Activated naive CD4-positive, alpha-beta T cell treated with anti-CD3 and anti-CD28 coated beads, Interleukin-2, amount 10 ng/mL, durations not matched to agents 7 days and 5 days (primary cell): ENCODE measurements at regions of chr7 and their contacts with region 1.

Region 1: GRCh38 chr7:74401137-74401859 is 52.4 kb upstream of the GTF2IRD1 start:
- DNase-seq: peak; percentile 83
- H3K4me3 Mint-ChIP-seq: no peak overlapping the region
- H3K27ac Mint-ChIP-seq: no peak overlapping the region
- H3K4me1 Mint-ChIP-seq: no peaks in the 10 kb centered on the region
- H3K27me3 Mint-ChIP-seq: no peaks in the 10 kb centered on the region

Region 2: DNA sequence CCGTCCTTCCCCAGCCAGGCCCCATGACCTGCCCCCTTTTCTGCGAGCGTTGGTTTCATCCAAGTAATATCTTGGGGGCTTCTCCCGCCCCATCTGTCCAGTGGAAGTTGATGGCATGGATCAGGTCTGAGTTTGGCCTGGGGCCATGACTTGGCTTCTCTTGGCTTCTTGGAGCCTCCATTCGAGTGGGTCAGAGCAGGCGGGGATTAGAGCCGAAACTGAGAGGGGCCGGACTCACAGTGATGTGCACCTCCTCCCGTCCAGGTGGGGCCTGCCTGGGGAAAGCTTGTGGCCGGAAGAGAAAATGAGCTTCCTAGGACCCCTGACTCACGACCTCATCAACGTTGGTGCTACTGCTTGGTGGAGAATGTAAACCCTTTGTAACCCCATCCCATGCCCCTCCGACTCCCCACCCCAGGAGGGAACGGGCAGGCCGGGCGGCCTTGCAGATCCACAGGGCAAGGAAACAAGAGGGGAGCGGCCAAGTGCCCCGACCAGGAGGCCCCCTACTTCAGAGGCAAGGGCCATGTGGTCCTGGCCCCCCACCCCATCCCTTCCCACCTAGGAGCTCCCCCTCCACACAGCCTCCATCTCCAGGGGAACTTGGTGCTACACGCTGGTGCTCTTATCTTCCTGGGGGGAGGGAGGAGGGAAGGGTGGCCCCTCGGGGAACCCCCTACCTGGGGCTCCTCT is 332.8 kb before region 1 on chr7:
- CTCF ChIA-PET with region 1: interaction called, 29 read pairs
- DNase-seq: no peak
- H3K4me3 Mint-ChIP-seq: no peak overlapping the region
- H3K27ac Mint-ChIP-seq: no peak overlapping the region
- H3K4me1 Mint-ChIP-seq: peaks cover 2% of the 10 kb centered on the region
- H3K27me3 Mint-ChIP-seq: peaks cover 5% of the 10 kb centered on the region

Region 3: DNA sequence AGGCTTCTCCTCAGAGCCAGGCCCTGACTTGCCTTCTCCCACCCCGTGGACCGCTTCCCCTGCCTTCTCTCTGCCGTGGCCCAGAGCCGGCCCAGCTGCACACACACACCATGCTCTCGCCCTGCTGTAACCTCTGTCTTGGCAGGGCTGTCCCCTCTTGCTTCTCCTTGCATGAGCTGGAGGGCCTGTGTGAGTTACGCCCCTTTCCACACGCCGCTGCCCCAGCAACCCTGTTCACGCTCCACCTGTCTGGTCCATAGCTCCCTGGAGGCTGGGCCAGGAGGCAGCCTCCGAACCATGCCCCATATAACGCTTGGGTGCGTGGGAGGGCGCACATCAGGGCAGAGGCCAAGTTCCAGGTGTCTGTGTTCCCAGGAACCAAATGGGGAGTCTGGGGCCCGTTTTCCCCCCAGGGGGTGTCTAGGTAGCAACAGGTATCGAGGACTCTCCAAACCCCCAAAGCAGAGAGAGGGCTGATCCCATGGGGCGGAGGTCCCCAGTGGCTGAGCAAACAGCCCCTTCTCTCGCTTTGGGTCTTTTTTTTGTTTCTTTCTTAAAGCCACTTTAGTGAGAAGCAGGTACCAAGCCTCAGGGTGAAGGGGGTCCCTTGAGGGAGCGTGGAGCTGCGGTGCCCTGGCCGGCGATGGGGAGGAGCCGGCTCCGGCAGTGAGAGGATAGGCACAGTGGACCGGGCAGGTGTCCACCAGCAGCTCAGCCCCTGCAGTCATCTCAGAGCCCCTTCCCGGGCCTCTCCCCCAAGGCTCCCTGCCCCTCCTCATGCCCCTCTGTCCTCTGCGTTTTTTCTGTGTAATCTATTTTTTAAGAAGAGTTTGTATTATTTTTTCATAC is 279.7 kb before region 1 on chr7:
- CTCF ChIA-PET with region 1: no interaction called
- DNase-seq: no peak
- H3K4me3 Mint-ChIP-seq: no peak overlapping the region
- H3K27ac Mint-ChIP-seq: no peak overlapping the region
- H3K4me1 Mint-ChIP-seq: no peaks in the 10 kb centered on the region
- H3K27me3 Mint-ChIP-seq: no peaks in the 10 kb centered on the region

Region 4: GRCh38 chr7:74275401-74275881 is 125.9 kb before region 1 on chr7:
- CTCF ChIA-PET with region 1: interaction called, 20 read pairs
- DNase-seq: no peak
- H3K4me3 Mint-ChIP-seq: no peak overlapping the region
- H3K27ac Mint-ChIP-seq: no peak overlapping the region
- H3K4me1 Mint-ChIP-seq: peaks cover 14% of the 10 kb centered on the region
- H3K27me3 Mint-ChIP-seq: peaks cover 38% of the 10 kb centered on the region

Region 5: GRCh38 chr7:74379938-74380337 is 21.4 kb before region 1 on chr7:
- CTCF ChIA-PET with region 1: interaction called, 17 read pairs
- DNase-seq: no peak
- H3K4me3 Mint-ChIP-seq: no peak overlapping the region
- H3K27ac Mint-ChIP-seq: no peak overlapping the region
- H3K4me1 Mint-ChIP-seq: no peaks in the 10 kb centered on the region
- H3K27me3 Mint-ChIP-seq: peaks cover 8% of the 10 kb centered on the region